ENCODE measurements at regions of chr7 and their contacts with region 1.

Region 1: DNA sequence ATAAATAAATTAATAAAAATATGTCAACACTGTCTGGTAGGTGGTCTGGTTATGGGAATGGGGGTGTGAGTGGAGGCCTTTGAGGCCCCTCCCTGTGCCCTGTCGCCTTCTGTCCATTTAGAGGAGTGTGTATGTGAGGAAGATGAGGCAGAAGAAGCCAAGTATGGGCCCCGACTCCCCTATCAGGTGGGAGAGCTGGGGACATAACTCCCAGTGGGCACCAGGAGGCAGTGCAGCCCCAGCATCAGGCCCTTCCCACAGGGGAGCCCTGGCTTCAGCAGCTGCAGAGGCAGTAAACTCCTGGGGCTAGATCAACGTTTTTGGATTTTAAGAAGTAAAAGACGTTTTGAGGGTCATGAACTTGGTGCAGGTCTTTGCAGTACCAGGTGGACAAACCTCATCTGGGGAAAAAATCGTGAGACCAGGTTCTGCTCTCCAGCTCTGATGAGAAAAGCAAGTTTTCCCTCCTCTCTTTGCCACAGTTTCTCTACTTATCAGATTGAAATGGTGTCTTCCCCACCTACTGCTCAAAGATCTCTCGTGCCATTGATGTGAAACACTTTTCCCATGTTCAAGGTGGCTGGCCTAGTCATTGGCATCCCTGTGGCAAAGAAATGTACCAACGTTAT is 167.8 kb upstream of the EEPD1 start:
- DNase-seq: no peak
- H3K4me3 ChIP-seq: no peak overlapping the region
- H3K27ac ChIP-seq: no peak overlapping the region
- H3K4me1 ChIP-seq: no peaks in the 10 kb centered on the region
- H3K27me3 ChIP-seq: no peaks in the 10 kb centered on the region
- CTCF ChIP-seq: peak; percentile 86 to 97 (median 90)
- POLR2A ChIP-seq: no peak

Region 2: GRCh38 chr7:35758421-35758820 is 226.8 kb before region 1 on chr7:
- intact Hi-C with region 1: no loop called
- DNase-seq: no peak
- H3K4me3 ChIP-seq: no peak overlapping the region
- H3K27ac ChIP-seq: no peak overlapping the region
- H3K4me1 ChIP-seq: peaks cover 25% of the 10 kb centered on the region
- H3K27me3 ChIP-seq: no peaks in the 10 kb centered on the region
- CTCF ChIP-seq: no peak
- POLR2A ChIP-seq: no peak

Region 3: DNA sequence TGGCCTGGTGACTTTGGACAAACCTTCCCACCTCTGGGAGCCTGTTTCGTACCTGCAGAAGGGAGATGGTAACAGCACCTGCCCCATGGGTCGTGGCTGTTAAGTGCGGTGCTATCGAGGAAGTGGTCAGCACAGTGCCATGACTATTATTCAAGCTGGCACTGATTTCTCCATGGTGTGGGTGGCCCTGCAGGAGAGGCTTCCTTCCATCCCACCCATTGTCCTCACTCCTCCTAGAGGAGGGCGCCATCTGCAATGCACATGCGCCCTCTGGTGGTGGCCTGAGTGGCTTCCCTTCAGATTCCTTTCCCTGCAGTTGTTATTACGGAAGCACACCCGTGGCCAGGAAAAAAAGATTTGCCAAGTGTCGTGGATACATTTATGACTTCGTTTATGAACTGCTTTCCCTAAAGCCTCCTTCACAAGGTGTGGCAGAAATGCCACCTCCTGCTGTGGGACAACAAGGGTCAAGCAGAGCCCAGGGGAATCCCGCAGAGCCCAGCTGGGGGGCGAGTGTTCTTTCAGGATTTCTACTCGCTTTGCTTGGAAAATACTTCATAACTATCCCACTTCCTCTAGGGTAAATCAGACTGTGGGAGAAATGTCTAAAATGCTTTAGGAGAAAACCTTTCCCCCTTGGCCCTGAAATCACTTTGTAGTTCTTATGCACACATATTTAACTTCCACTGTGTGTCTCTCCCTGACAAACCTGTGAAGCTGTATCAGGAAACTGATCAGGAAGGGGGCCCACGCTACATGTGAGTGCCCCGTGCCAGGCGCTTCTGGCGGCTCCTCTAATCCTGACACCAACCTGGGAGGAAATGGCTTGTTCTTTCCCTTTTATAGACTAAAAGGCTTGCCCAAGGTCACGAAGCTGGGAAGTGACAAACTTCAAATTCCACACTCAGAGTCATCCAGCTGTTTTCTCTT is 306.4 kb after region 1 on chr7:
- intact Hi-C with region 1: loop called (anchors 5 kb)
- DNase-seq: no peak
- H3K4me3 ChIP-seq: peak overlapping the region; percentile 23 to 38
- H3K27ac ChIP-seq: peak overlapping the region; percentile 81
- H3K4me1 ChIP-seq: peaks cover 23% of the 10 kb centered on the region
- H3K27me3 ChIP-seq: no peaks in the 10 kb centered on the region
- CTCF ChIP-seq: peak; percentile 93 to 98 (median 94)
- POLR2A ChIP-seq: no peak

Region 4: GRCh38 chr7:36318116-36318515 is 332.9 kb after region 1 on chr7:
- intact Hi-C with region 1: loop called (anchors 2 kb)
- DNase-seq: no peak
- H3K4me3 ChIP-seq: no peak overlapping the region
- H3K27ac ChIP-seq: no peak overlapping the region
- H3K4me1 ChIP-seq: no peaks in the 10 kb centered on the region
- H3K27me3 ChIP-seq: no peaks in the 10 kb centered on the region
- CTCF ChIP-seq: no peak
- POLR2A ChIP-seq: no peak

Region 5: DNA sequence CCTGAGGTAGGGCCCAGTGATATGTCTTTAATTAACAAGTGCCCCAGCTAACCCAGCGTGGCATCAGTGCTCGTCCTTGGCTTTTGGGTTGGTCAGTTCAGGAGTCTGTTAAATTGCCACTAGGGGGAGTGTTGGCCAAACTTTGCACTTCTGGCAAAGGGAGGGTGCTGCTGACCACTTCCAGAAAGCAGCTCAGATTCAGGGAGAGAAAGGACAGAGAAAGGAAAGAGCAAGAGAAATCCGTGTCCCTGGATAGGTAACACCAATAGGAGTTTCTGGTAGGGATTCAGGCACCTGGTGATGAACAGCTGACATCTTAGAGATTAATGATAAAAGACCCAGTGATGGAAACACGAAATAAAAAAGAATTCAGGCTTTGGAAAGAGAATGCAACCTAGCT is 982.1 kb after region 1 on chr7:
- intact Hi-C with region 1: no loop called
- DNase-seq: no peak
- H3K4me3 ChIP-seq: no peak overlapping the region
- H3K27ac ChIP-seq: no peak overlapping the region
- H3K4me1 ChIP-seq: no peaks in the 10 kb centered on the region
- H3K27me3 ChIP-seq: no peaks in the 10 kb centered on the region
- CTCF ChIP-seq: peak; percentile 65 to 78 (median 73)
- POLR2A ChIP-seq: no peak

Measured in vagina (tissue), 2 donors.